GM18951 (cell line): ENCODE measurements at regions of chr6 and their contacts with region 1.

Region 1: GRCh38 chr6:24855395-24856245 is 56.9 kb upstream of the ARMH2 start:
- POLR2A ChIP-seq: no peak

Region 2: GRCh38 chr6:25017932-25018567 is 162.4 kb after region 1 on chr6:
- in situ Hi-C with region 1: loop called (anchors 10 kb)
- POLR2A ChIP-seq: no peak

Region 3: GRCh38 chr6:25070547-25071366 is 215.1 kb after region 1 on chr6:
- in situ Hi-C with region 1: loop called (anchors 10 kb)
- POLR2A ChIP-seq: no peak